ENCODE measurements at regions of chr19 and their contacts with region 1.

Region 1: DNA sequence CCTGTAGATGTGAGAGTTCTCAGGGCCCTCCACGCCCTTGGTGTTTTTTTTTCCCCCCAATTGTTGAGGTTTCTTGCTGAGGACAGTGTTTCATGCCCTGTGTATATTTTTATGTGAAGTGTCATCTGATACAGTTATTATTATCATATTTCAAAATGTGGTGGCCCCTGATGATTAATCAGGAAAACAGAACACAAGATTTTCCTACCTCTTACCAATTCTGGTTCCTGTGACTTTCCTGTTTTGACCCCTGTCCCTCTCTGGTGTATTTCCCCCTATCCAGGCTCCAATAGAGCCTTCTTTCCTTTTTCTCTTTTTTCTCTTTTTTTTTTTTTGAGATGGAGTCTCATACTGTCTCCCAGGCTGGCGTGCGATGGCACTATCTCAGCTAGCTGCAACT is 642 bp downstream of the PSG8 start:
- DNase-seq: no peak
- H3K4me3 ChIP-seq: no peak overlapping the region
- H3K27ac ChIP-seq: no peak overlapping the region
- H3K27me3 ChIP-seq: no peaks in the 10 kb centered on the region
- CTCF ChIP-seq: no peak

Region 2: DNA sequence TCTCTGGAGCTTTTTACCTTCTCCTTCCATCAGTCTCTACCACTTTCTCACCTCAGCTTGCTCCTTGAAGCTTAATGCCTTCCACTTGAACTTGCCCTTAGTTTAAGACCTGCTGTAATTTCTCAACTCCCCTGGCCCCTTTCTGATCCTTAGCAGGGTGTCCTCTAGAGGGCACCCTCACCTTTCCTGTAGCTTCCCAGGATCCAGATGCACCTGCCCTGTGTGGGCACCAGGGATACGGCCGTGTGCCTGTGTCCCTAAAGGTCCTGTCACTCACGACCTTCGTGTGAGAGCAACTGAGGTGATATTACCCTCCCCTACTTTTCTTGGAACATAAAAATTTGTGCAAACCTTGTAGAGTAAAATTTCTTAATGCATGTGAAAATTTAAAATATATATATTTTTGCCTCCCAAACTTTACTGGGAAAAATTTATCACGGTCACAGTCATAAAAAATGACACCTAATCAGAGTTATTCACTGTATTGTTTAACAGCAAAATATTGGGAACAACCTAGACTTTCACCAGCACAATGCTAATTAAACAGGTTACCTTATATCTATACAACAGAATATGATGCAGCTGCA is 71.0 kb before region 1 on chr19:
- intact Hi-C with region 1: loop called in 1 of 2 experiments (anchors 10 kb)
- DNase-seq: no peak
- H3K4me3 ChIP-seq: no peak overlapping the region
- H3K27ac ChIP-seq: no peak overlapping the region
- H3K27me3 ChIP-seq: peaks cover 0 to 9% (median 0%) of the 10 kb centered on the region in 45 donors
- CTCF ChIP-seq: peak in 46 of 56 donors; percentile 17 to 63 (median 40)